ENCODE measurements at regions of chr21 and their contacts with region 1.

Region 1: DNA sequence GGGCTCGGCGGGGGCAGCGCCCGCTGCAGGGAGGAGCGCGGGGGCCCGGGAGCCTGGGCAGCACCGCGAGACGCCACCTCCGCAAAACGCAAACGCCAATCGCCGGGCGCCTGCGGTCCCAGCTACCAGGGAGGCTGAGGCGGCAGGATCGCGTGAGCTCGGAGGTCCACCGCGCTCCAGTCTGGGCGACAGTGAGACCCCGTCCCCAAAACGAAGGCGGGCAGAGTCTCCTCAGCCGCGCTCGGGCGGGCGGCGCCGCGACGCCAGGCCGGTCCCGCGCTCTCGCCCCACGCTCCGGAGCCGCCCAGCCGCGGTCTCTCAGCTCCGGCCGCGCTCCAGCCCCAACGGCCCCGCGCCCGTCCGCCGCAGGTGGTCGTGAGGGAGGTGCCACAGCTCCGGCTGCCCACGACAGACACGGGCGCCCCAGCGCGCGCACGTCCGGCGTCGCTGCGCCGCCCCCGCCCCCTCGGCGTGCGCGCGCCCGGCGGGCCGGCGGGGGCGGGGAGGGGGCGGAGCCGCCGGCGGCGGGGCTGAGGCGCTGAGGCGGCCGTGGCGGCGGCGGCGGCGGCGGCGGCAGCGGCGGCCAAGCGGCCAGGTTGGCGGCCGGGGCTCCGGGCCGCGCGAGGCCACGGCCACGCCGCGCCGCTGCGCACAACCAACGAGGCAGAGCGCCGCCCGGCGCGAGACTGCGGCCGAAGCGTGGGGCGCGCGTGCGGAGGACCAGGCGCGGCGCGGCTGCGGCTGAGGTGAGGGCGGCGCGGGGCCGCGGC is at the start of gene ADARB1:
- DNase-seq: peak; percentile 65
- H3K4me3 Mint-ChIP-seq: peak within 1 kb of the TSS; percentile 90
- H3K27ac Mint-ChIP-seq: peak within 1 kb of the TSS; percentile 72
- H3K4me1 Mint-ChIP-seq: peaks cover 42% of the 10 kb centered on the region
- H3K27me3 Mint-ChIP-seq: no peaks in the 10 kb centered on the region
- total RNA-seq, gene ADARB1: 59.1 to 59.6 TPM

Region 2: GRCh38 chr21:45087022-45087823 is 13.0 kb after region 1 on chr21:
- CTCF ChIA-PET with region 1: interaction called, 5 read pairs
- POLR2A ChIA-PET with region 1: interaction called, 12 read pairs
- DNase-seq: peak; percentile 61
- H3K4me3 Mint-ChIP-seq: peak overlapping the region; percentile 43
- H3K27ac Mint-ChIP-seq: peak overlapping the region; percentile 79
- H3K4me1 Mint-ChIP-seq: peaks cover 77% of the 10 kb centered on the region
- H3K27me3 Mint-ChIP-seq: no peaks in the 10 kb centered on the region